Mammary epithelial cell (primary cell): ENCODE measurements at regions of chr6 and their contacts with region 1.

Region 1: GRCh38 chr6:55069132-55069781 is 105.1 kb upstream of the HCRTR2 start:
- DNase-seq: peak; percentile 39
- H3K4me3 ChIP-seq: no peak overlapping the region
- H3K27ac ChIP-seq: no peak overlapping the region
- H3K4me1 ChIP-seq: no peaks in the 10 kb centered on the region
- H3K27me3 ChIP-seq: no peaks in the 10 kb centered on the region
- CTCF ChIP-seq: peak; percentile 76 to 80

Region 2: DNA sequence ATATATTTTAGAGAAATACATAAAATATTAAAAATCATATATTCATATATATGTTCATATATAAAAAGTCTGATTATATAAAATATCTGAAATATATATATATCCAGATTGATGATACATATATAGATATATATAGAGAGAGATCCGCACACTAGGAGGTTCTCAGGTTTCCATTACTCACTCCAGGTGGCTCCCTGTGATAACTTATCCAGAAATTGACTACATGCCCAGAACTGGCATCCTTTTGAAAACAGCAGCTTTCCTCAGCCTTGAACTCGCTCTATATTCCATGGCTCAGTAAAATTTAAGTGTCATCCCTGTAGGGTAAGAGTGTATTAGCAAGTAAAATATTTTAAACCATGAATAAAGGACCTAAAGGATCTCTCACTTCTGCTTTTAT is 554.2 kb before region 1 on chr6:
- CTCF ChIA-PET with region 1: no interaction called
- dilution Hi-C with region 1: no loop called
- in situ Hi-C with region 1: no loop called
- intact Hi-C with region 1: loop called (anchors 1 kb)
- DNase-seq: peak; percentile 54
- H3K4me3 ChIP-seq: no peak overlapping the region
- H3K27ac ChIP-seq: no peak overlapping the region
- H3K4me1 ChIP-seq: peaks cover 4% of the 10 kb centered on the region
- H3K27me3 ChIP-seq: no peaks in the 10 kb centered on the region
- CTCF ChIP-seq: peak in 1 of 2 donors; percentile 33

Region 3: DNA sequence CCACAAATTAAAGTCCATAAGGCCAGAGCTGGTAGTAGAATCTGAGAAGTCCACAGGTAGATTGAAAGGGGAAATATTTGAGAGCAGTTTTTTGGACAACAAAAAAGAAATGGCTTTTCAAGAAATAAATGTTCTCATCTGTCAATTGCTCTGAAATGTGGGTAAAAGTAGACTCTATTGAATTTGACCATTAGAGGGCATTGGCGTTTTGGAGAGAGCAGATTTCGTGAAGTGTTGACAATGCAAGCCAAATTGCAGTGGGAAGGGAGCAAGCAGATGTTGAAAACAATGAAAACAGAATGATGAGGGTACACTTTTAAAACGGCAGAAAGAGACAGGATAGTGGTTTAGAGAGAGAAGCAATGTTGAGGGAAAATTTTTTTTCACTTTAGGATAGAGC is 371.8 kb before region 1 on chr6:
- CTCF ChIA-PET with region 1: no interaction called
- dilution Hi-C with region 1: no loop called
- in situ Hi-C with region 1: loop called in 1 of 2 experiments (anchors 25 kb)
- intact Hi-C with region 1: loop called (anchors 1 kb)
- DNase-seq: peak; percentile 37
- H3K4me3 ChIP-seq: no peak overlapping the region
- H3K27ac ChIP-seq: no peak overlapping the region
- H3K4me1 ChIP-seq: peaks cover 23% of the 10 kb centered on the region
- H3K27me3 ChIP-seq: no peaks in the 10 kb centered on the region
- CTCF ChIP-seq: peak; percentile 46 to 67

Region 4: DNA sequence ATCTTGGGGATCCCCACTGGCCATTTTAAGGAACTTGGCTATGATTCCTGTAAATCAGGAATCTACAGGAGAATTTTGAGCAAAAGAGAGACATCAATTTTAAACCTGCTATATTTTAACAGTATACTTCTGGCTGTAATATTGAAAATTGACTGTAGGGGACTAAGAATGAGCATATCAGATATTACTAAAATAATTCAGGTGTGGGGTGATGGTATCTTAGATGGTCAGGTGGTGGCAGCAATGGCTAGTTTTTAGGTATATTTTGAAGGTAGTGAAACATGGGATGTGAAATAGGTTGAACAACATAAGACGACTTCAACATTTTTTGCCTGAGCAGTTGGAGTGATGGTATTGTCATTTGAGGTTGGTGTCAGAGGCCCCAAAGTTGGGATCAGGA is 190.6 kb before region 1 on chr6:
- CTCF ChIA-PET with region 1: no interaction called
- dilution Hi-C with region 1: no loop called
- in situ Hi-C with region 1: no loop called
- intact Hi-C with region 1: loop called (anchors 5 kb)
- DNase-seq: no peak
- H3K4me3 ChIP-seq: no peak overlapping the region
- H3K27ac ChIP-seq: no peak overlapping the region
- H3K4me1 ChIP-seq: peaks cover 59% of the 10 kb centered on the region
- H3K27me3 ChIP-seq: no peaks in the 10 kb centered on the region
- CTCF ChIP-seq: no peak